Activated CD4-positive, alpha-beta T cell treated with anti-CD3 and anti-CD28 coated beads for 36 hours (primary cell): ENCODE measurements at regions of chr15 and their contacts with region 1.

Region 1: DNA sequence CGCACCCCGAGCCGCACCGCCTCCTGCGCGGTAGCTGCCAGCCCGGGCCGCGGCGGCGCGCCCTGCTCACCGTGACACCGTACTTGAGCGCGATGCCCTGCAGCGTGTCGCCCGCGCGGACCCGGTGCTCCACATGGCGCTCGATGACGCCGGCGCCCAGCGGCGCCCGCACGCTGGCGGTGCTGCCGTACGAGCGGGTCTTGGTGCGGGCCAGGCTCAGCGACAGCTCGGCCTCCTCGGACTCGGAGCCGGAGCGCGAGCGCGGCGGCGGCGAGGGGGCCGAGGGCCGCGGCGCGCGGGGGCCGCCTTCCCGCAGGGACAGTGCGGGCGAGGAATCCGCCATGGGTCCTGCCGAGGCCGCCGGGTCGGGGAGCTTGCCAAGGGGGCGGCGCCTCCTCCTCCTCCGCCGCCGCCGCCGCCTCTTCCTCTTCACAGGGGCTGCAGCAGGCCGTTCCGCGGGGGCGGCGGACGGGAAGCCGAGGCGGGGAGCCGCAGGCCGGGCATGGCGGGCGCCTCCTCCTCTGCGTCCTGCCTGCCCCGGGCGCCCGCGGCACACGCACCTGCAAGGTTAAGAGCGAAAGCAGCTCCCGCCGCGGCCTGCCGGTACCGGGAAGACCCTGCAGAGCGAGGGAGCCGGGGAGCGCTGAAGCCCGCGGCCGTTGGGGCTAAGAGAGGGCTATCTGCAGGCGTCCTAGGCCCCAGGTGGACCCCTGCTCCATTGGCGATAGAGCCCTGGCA is at the start of gene LYSMD2:
- DNase-seq: peak; percentile 81
- ATAC-seq: peak; percentile 45
- H3K4me3 Mint-ChIP-seq: peak within 1 kb of the TSS; percentile 77
- H3K27ac Mint-ChIP-seq: peak within 1 kb of the TSS; percentile 88
- H3K4me1 Mint-ChIP-seq: peaks cover 55% of the 10 kb centered on the region
- H3K27me3 Mint-ChIP-seq: no peaks in the 10 kb centered on the region
- total RNA-seq, gene LYSMD2: 19.1 to 20.1 TPM

Region 2: GRCh38 chr15:50765195-50765973 is 972.1 kb before region 1 on chr15 and contains the start of gene SPPL2A:
- CTCF ChIA-PET with region 1: no interaction called
- POLR2A ChIA-PET with region 1: no interaction called
- intact Hi-C with region 1: loop called in 1 of 2 experiments (anchors 5 kb)
- DNase-seq: peak; percentile 96
- ATAC-seq: peak; percentile 90
- H3K4me3 Mint-ChIP-seq: peak within 1 kb of the TSS; percentile 82
- H3K27ac Mint-ChIP-seq: peak within 1 kb of the TSS; percentile 99
- H3K4me1 Mint-ChIP-seq: peaks cover 50% of the 10 kb centered on the region
- H3K27me3 Mint-ChIP-seq: no peaks in the 10 kb centered on the region
- total RNA-seq, gene SPPL2A: 53.1 to 66.1 TPM

Region 3: GRCh38 chr15:51438526-51438925 is 298.9 kb before region 1 on chr15:
- CTCF ChIA-PET with region 1: no interaction called
- POLR2A ChIA-PET with region 1: no interaction called
- intact Hi-C with region 1: no loop called
- DNase-seq: no peak
- ATAC-seq: no peak
- H3K4me3 Mint-ChIP-seq: no peak overlapping the region
- H3K27ac Mint-ChIP-seq: no peak overlapping the region
- H3K4me1 Mint-ChIP-seq: no peaks in the 10 kb centered on the region
- H3K27me3 Mint-ChIP-seq: peaks cover 5% of the 10 kb centered on the region

Region 4: DNA sequence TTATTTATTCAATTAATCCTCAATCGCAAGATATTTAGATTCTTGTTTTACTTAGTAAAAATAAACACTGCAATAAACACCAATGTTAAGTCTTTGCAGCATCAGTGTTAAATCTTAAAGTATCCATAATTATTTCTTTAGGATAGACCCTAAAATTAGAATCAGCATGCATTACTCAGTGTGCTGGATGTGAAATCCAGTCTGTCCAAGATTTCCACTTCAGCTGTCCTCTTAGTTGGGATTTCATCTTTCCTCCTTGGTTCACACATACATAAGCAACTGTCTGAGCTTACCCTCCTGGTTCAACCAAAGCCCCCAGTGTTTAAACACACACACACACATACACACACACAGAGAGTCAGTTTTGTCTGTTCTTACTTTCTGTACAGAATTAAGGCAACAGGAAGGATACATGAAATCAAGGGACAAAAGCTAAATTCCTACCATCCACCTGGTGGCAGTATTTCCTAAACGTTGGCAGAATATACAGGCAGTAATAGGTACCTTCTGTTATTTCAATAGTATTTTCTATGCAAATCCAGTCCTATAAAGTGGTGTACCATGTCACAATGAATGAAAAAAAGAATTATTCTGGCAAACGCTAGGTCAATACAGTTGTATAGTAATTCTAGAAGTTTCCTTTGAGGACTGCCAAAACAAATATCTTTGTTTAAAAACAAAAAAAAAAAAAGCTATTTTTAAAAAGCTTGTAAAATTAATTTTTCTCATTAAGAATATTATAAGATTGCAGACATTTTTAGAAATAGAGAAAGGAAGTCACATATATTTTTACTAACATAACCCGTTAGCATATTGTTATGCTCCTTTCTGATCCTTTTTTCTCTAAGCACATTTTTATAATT is 87.6 kb before region 1 on chr15:
- CTCF ChIA-PET with region 1: interaction called, 13 read pairs
- POLR2A ChIA-PET with region 1: interaction called, 4 read pairs
- intact Hi-C with region 1: no loop called
- DNase-seq: peak; percentile 44
- ATAC-seq: peak; percentile 74
- H3K4me3 Mint-ChIP-seq: no peak overlapping the region
- H3K27ac Mint-ChIP-seq: no peak overlapping the region
- H3K4me1 Mint-ChIP-seq: no peaks in the 10 kb centered on the region
- H3K27me3 Mint-ChIP-seq: no peaks in the 10 kb centered on the region

Region 5: GRCh38 chr15:51675234-51675633 is 62.2 kb before region 1 on chr15:
- CTCF ChIA-PET with region 1: no interaction called
- POLR2A ChIA-PET with region 1: no interaction called
- intact Hi-C with region 1: no loop called
- DNase-seq: no peak
- ATAC-seq: no peak
- H3K4me3 Mint-ChIP-seq: no peak overlapping the region
- H3K27ac Mint-ChIP-seq: no peak overlapping the region
- H3K4me1 Mint-ChIP-seq: no peaks in the 10 kb centered on the region
- H3K27me3 Mint-ChIP-seq: peaks cover 10% of the 10 kb centered on the region

Region 6: DNA sequence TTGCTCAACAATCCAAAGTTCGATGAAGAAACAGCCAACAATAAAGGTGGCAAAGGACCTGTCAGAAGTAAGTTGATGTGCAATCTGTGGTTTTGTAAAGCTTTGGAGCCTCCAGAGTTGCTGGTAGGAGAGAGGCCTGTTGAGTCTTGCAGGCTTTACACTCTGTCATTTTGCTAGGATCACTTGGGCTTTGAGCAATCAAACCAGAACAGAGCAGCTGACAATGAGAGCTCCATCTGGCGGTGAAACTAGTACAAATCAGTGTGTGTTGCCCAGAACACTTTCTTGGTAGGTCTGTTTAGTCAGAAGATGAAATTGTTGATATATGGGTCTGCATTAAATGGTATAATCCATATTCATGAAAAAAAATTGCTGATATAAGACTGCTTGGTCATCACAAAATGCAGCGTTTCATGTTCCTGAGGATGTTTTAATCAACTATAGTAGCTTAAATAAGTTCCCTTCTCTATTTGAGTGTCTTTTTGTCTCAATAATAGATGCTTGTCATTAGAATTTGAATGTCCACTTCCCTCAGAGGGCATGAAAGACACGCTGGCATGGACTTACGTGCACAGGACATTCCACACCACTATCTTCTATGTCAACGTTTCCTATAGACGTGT is 39.6 kb after region 1 on chr15:
- CTCF ChIA-PET with region 1: interaction called, 33 read pairs
- POLR2A ChIA-PET with region 1: no interaction called
- intact Hi-C with region 1: loop called in 1 of 2 experiments (anchors 5 kb)
- DNase-seq: peak; percentile 73
- ATAC-seq: peak; percentile 87
- H3K4me3 Mint-ChIP-seq: no peak overlapping the region
- H3K27ac Mint-ChIP-seq: no peak overlapping the region
- H3K4me1 Mint-ChIP-seq: peaks cover 3% of the 10 kb centered on the region
- H3K27me3 Mint-ChIP-seq: no peaks in the 10 kb centered on the region

Region 7: GRCh38 chr15:51971375-51972133 is 234.1 kb after region 1 on chr15 and contains the start of gene LEO1:
- CTCF ChIA-PET with region 1: no interaction called
- POLR2A ChIA-PET with region 1: interaction called, 3 read pairs
- intact Hi-C with region 1: loop called in 1 of 2 experiments (anchors 1 kb)
- DNase-seq: peak; percentile 93
- ATAC-seq: peak; percentile 95
- H3K4me3 Mint-ChIP-seq: peak within 1 kb of the TSS; percentile 100
- H3K27ac Mint-ChIP-seq: peak within 1 kb of the TSS; percentile 94
- H3K4me1 Mint-ChIP-seq: peaks cover 21% of the 10 kb centered on the region
- H3K27me3 Mint-ChIP-seq: no peaks in the 10 kb centered on the region
- total RNA-seq, gene LEO1: 31.4 to 40.0 TPM

Region 8: GRCh38 chr15:52558196-52558595 is 820.7 kb after region 1 on chr15:
- CTCF ChIA-PET with region 1: no interaction called
- POLR2A ChIA-PET with region 1: no interaction called
- intact Hi-C with region 1: loop called in 1 of 2 experiments (anchors 10 kb)
- DNase-seq: peak; percentile 83
- ATAC-seq: peak; percentile 82
- H3K4me3 Mint-ChIP-seq: peak overlapping the region; percentile 63
- H3K27ac Mint-ChIP-seq: peak overlapping the region; percentile 96
- H3K4me1 Mint-ChIP-seq: peaks cover 66% of the 10 kb centered on the region
- H3K27me3 Mint-ChIP-seq: no peaks in the 10 kb centered on the region